ENCODE measurements at regions of chr5 and their contacts with region 1.

Region 1: DNA sequence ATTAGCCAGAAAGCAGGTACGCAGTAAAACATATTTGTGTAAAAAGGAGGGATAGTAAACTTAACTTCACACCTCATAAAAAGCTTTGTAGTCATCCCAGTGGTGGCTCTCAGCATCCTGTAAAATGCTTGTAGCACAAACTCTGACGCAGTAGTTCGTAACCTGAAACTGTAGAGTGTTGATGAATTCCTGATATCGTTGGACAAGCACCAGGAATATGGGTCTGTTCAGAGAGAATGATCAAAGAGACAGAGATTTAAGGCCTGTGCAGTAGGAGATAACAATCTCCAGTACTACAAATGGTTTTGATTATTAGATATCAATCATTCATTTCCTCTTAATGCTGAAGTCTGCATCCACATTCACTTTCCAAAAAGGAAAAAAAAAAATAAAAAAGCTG is 148.5 kb downstream of the KIAA0825 start:
- DNase-seq: no peak
- H3K4me3 ChIP-seq: no peak overlapping the region
- H3K27ac ChIP-seq: no peak overlapping the region
- H3K4me1 ChIP-seq: no peaks in the 10 kb centered on the region
- H3K27me3 ChIP-seq: no peaks in the 10 kb centered on the region
- CTCF ChIP-seq: no peak
- POLR2A ChIP-seq: no peak

Region 2: DNA sequence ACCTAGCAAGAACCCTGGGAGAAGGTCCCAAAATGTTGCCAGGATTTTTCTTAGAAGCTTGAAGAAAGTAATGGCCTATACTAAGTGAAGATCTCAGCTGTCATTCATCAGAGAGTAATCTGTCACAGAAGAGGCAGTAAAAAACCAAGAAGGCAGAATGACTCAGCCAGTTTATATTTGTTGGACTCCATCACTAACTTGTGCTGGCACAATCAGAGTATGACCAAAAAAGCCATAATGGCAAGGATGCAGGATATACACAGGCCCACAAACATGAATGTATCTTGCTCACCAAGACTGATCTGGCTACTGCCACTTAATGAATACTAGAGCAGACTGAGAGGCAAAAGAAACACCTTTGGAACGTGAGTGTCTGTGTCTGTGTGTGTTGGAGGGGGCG is 624.5 kb before region 1 on chr5:
- intact Hi-C with region 1: loop called (anchors 5 kb)
- DNase-seq: no peak
- H3K4me3 ChIP-seq: no peak overlapping the region
- H3K27ac ChIP-seq: no peak overlapping the region
- H3K4me1 ChIP-seq: no peaks in the 10 kb centered on the region
- H3K27me3 ChIP-seq: no peaks in the 10 kb centered on the region
- CTCF ChIP-seq: no peak
- POLR2A ChIP-seq: no peak

Region 3: GRCh38 chr5:93978222-93978621 is 491.7 kb before region 1 on chr5:
- intact Hi-C with region 1: loop called (anchors 5 kb)
- DNase-seq: no peak
- H3K4me3 ChIP-seq: no peak overlapping the region
- H3K27ac ChIP-seq: no peak overlapping the region
- H3K4me1 ChIP-seq: no peaks in the 10 kb centered on the region
- H3K27me3 ChIP-seq: no peaks in the 10 kb centered on the region
- CTCF ChIP-seq: no peak
- POLR2A ChIP-seq: no peak

Region 4: DNA sequence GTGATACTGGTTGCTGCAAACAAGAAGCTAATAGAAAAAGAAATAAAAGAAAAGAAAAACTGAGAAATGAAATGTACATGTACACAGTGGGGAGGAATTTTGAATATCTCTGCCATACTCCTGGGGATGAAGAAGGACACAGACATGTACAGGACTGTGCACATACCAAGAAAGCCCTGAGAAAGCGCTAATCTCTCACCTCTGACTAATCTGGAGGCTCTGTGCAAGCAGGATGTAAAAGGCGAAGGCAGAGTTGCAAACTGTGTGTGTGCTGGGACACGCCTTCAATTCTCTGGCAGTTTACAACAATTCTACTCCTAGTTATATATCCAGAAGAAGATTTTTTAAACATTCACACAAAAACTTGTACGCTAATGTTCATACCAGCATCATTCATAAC is 62.9 kb before region 1 on chr5:
- intact Hi-C with region 1: no loop called
- DNase-seq: no peak
- H3K4me3 ChIP-seq: no peak overlapping the region
- H3K27ac ChIP-seq: no peak overlapping the region
- H3K4me1 ChIP-seq: no peaks in the 10 kb centered on the region
- H3K27me3 ChIP-seq: no peaks in the 10 kb centered on the region
- CTCF ChIP-seq: no peak
- POLR2A ChIP-seq: no peak